ENCODE measurements at regions of chr14 and their contacts with region 1.

Region 1: GRCh38 chr14:100645192-100645990 is 58.2 kb upstream of the BEGAIN start:
- DNase-seq: peak; percentile 57 to 76
- H3K4me3 ChIP-seq: no peak overlapping the region
- H3K27ac ChIP-seq: no peak overlapping the region
- H3K4me1 ChIP-seq: no peaks in the 10 kb centered on the region
- H3K27me3 ChIP-seq: no peaks in the 10 kb centered on the region
- CTCF ChIP-seq: peak; percentile 47 to 75 (median 60)
- POLR2A ChIP-seq: no peak

Region 2: GRCh38 chr14:100383727-100384158 is 261.6 kb before region 1 on chr14:
- intact Hi-C with region 1: loop called (anchors 10 kb)
- DNase-seq: peak; percentile 39 to 49
- H3K4me3 ChIP-seq: no peak overlapping the region
- H3K27ac ChIP-seq: no peak overlapping the region
- H3K4me1 ChIP-seq: no peaks in the 10 kb centered on the region
- H3K27me3 ChIP-seq: no peaks in the 10 kb centered on the region
- CTCF ChIP-seq: peak; percentile 46 to 69 (median 64)
- POLR2A ChIP-seq: no peak

Region 3: GRCh38 chr14:100577321-100577985 is 67.9 kb before region 1 on chr14:
- intact Hi-C with region 1: no loop called
- DNase-seq: no peak
- H3K4me3 ChIP-seq: no peak overlapping the region
- H3K27ac ChIP-seq: no peak overlapping the region
- H3K4me1 ChIP-seq: no peaks in the 10 kb centered on the region
- H3K27me3 ChIP-seq: no peaks in the 10 kb centered on the region
- CTCF ChIP-seq: no peak
- POLR2A ChIP-seq: no peak

Region 4: GRCh38 chr14:100677554-100678468 is 32.4 kb after region 1 on chr14:
- intact Hi-C with region 1: no loop called
- DNase-seq: peak; percentile 63 to 77
- H3K4me3 ChIP-seq: no peak overlapping the region
- H3K27ac ChIP-seq: peak overlapping the region; percentile 73 to 80
- H3K4me1 ChIP-seq: peaks cover 0 to 15% of the 10 kb centered on the region in 2 donors
- H3K27me3 ChIP-seq: no peaks in the 10 kb centered on the region
- CTCF ChIP-seq: no peak
- POLR2A ChIP-seq: no peak